Caco-2 (cell line): ENCODE measurements at regions of chr20 and their contacts with region 1.

Region 1: GRCh38 chr20:18496740-18497592 is at the start of gene RBBP9:
- DNase-seq: peak; percentile 89 to 90
- H3K4me3 ChIP-seq: peak within 1 kb of the TSS; percentile 64
- H3K4me3 Mint-ChIP-seq: peak within 1 kb of the TSS; percentile 94
- H3K27ac Mint-ChIP-seq: peak within 1 kb of the TSS; percentile 72
- H3K4me1 ChIP-seq: peaks cover 8% of the 10 kb centered on the region; the same call in 1 of the 2 replicates
- H3K4me1 Mint-ChIP-seq: peaks cover 8% of the 10 kb centered on the region
- H3K27me3 ChIP-seq: no peaks in the 10 kb centered on the region
- H3K27me3 Mint-ChIP-seq: no peaks in the 10 kb centered on the region
- CTCF ChIP-seq: no peak
- total RNA-seq, gene RBBP9: 28.3 and 34.7 TPM in 2 replicates

Region 2: GRCh38 chr20:18466894-18467730 is 29.9 kb before region 1 on chr20 and contains the starts of genes DZANK1 and POLR3F:
- CTCF ChIA-PET with region 1: interaction called, 3 read pairs
- POLR2A ChIA-PET with region 1: interaction called, 10 read pairs
- intact Hi-C with region 1: loop called (anchors 1 kb)
- DNase-seq: peak; percentile 98
- H3K4me3 ChIP-seq: peak within 1 kb of the TSS; percentile 82
- H3K4me3 Mint-ChIP-seq: peak within 1 kb of the TSS; percentile 98
- H3K27ac Mint-ChIP-seq: peak within 1 kb of the TSS; percentile 100
- H3K4me1 ChIP-seq: peaks cover 6% of the 10 kb centered on the region; the same call in 1 of the 2 replicates
- H3K4me1 Mint-ChIP-seq: peaks cover 17% of the 10 kb centered on the region
- H3K27me3 ChIP-seq: no peaks in the 10 kb centered on the region
- H3K27me3 Mint-ChIP-seq: no peaks in the 10 kb centered on the region
- CTCF ChIP-seq: no peak
- total RNA-seq, gene DZANK1: 8.6 and 9.6 TPM in 2 replicates
- total RNA-seq, gene POLR3F: 13.7 and 15.7 TPM in 2 replicates

Region 3: DNA sequence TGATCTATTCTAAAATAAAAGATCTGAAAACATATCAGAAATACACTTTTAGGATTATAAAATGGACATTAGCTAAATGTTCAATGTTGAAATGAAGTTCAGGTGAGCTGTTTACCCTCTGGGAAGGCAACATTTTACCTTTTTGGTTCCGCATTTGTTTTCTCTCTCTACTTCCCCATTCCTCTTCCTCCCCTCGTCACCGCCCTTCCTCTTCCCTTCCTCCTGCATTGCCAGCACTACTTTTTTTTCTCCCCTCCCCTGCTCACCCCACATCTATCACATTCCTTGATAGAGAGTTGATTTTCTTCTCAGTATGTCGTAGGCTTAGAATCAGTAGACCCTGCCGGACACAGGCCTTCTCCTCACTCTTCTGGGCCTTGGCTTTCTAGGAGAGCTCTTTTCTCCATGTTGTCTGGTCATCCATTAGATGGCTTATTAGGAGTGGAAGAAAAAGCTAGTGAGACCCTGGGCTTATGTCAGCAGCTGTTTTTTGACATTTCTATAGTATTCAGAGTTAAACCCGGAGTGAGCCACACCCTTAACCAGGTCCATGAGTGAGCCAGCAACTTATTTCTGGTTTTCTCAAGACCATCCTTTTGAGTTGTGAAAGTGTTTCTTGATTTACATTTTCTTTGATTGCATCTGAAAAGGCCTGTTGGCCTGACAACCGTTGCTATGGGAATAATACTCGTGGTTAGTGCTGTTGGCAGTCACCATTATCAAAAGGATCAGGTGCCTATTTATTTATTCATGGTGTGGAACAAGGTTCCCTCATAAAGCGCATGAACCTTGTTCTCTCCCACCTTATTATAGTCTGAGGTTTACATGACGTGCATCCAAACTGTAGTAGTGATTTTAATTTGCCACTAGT is 181.8 kb after region 1 on chr20:
- CTCF ChIA-PET with region 1: interaction called, 12 read pairs
- POLR2A ChIA-PET with region 1: no interaction called
- intact Hi-C with region 1: no loop called
- DNase-seq: no peak
- H3K4me3 ChIP-seq: no peak overlapping the region
- H3K4me3 Mint-ChIP-seq: no peak overlapping the region
- H3K27ac Mint-ChIP-seq: no peak overlapping the region
- H3K4me1 ChIP-seq: no peaks in the 10 kb centered on the region
- H3K4me1 Mint-ChIP-seq: peaks cover 6% of the 10 kb centered on the region
- H3K27me3 ChIP-seq: no peaks in the 10 kb centered on the region
- H3K27me3 Mint-ChIP-seq: no peaks in the 10 kb centered on the region
- CTCF ChIP-seq: no peak